GM23248 (cell line): ENCODE measurements at regions of chr9 and their contacts with region 1.

Region 1: GRCh38 chr9:115883457-115884329 is 269.9 kb upstream of the PAPPA start:
- DNase-seq: peak; percentile 69
- H3K4me3 ChIP-seq: no peak overlapping the region
- H3K27ac ChIP-seq: no peak overlapping the region
- H3K4me1 ChIP-seq: 0 out of 2 replicates have a peak, but pooled peaks cover 8% of the 10 kb centered on the region
- H3K27me3 ChIP-seq: no peaks in the 10 kb centered on the region

Region 2: GRCh38 chr9:114674798-114675540 is 1208.7 kb before region 1 on chr9:
- in situ Hi-C with region 1: no loop called
- DNase-seq: peak; percentile 53
- H3K4me3 ChIP-seq: no peak overlapping the region
- H3K27ac ChIP-seq: no peak overlapping the region
- H3K4me1 ChIP-seq: peaks cover 30% of the 10 kb centered on the region
- H3K27me3 ChIP-seq: no peaks in the 10 kb centered on the region

Region 3: GRCh38 chr9:116572095-116572748 is 688.5 kb after region 1 on chr9:
- in situ Hi-C with region 1: loop called (anchors 10 kb)
- DNase-seq: peak; percentile 88
- H3K4me3 ChIP-seq: no peak overlapping the region
- H3K27ac ChIP-seq: no peak overlapping the region
- H3K4me1 ChIP-seq: peaks cover 1% of the 10 kb centered on the region; the same call in 1 of the 2 replicates
- H3K27me3 ChIP-seq: no peaks in the 10 kb centered on the region